B cell (primary cell): ENCODE measurements at regions of chr6 and their contacts with region 1.

Region 1: DNA sequence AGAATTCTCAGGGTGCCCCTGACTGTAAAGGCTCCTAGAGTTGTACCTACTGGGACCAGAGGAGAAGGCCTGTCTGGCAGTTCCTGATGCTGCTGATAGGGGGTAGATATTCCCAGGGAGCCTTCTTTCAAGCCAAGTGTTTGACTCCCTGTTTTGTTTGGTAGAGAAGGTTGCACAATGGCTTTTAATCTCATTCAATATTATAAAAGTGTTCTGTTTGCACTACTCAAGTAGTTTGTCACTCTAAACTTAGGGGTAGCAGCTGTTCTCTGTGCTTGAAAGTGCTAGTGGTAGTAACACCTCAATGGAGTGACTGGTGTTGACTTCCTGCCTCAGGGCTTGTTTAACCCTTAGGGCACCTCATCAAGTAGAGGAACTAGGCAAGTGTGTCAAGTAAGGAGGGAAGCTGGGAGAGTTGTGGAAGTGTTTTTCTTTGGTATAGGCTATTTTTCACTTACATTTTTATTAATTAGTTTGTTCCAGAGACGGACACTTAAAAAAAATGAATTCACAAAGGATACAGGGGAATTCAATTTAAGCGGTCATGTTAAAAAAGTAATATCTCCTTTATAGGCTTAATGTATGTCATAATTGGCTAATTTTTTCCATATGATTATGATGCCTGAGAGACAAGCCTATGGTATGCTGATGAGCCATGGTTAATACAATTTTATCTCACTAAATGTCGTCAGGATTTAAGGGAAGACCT is 38.1 kb downstream of the BICRAL start:
- DNase-seq: peak; percentile 30
- ATAC-seq: peak; percentile 41
- H3K4me3 ChIP-seq: no peak overlapping the region
- H3K4me3 Mint-ChIP-seq: no peak overlapping the region
- H3K27ac ChIP-seq: peak overlapping the region in 1 of 2 donors; percentile 55
- H3K27ac Mint-ChIP-seq: peak overlapping the region; percentile 81
- H3K4me1 ChIP-seq: peaks cover 6 to 19% of the 10 kb centered on the region in 2 donors
- H3K4me1 Mint-ChIP-seq: peaks cover 26% of the 10 kb centered on the region
- H3K27me3 ChIP-seq: no peaks in the 10 kb centered on the region
- H3K27me3 Mint-ChIP-seq: no peaks in the 10 kb centered on the region
- CTCF ChIP-seq: no peak

Region 2: GRCh38 chr6:42777126-42777822 is 42.7 kb before region 1 on chr6:
- CTCF ChIA-PET with region 1: no interaction called
- POLR2A ChIA-PET with region 1: interaction called, 4 read pairs
- intact Hi-C with region 1: loop called (anchors 5 kb)
- DNase-seq: peak; percentile 49
- ATAC-seq: no peak
- H3K4me3 ChIP-seq: no peak overlapping the region
- H3K4me3 Mint-ChIP-seq: peak overlapping the region; percentile 62
- H3K27ac ChIP-seq: peak overlapping the region; percentile 16 to 32
- H3K27ac Mint-ChIP-seq: peak overlapping the region; percentile 91
- H3K4me1 ChIP-seq: peaks cover 60 to 67% of the 10 kb centered on the region in 2 donors
- H3K4me1 Mint-ChIP-seq: peaks cover 67% of the 10 kb centered on the region
- H3K27me3 ChIP-seq: no peaks in the 10 kb centered on the region
- H3K27me3 Mint-ChIP-seq: no peaks in the 10 kb centered on the region
- CTCF ChIP-seq: no peak

Region 3: DNA sequence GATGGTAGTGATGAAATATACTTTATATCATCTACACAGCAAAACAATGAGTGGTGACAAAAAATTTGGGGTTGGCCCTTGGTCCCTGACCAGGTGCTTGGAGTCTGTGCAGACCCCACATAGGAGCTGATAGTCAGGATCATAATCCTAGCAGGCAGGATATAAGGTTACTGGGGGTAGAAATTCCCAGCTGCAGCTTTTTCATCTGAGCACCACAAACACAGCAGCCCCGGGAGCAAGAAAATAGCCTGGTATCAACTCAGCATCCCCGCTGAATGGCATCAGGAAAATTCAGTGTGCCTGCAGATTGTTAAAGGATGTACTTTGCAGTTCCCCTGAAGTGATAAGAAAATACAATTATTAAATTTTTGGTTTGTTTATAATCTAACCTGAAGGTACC is 31.6 kb after region 1 on chr6:
- CTCF ChIA-PET with region 1: no interaction called
- POLR2A ChIA-PET with region 1: no interaction called
- intact Hi-C with region 1: no loop called
- DNase-seq: no peak
- ATAC-seq: no peak
- H3K4me3 ChIP-seq: no peak overlapping the region
- H3K4me3 Mint-ChIP-seq: no peak overlapping the region
- H3K27ac ChIP-seq: no peak overlapping the region
- H3K27ac Mint-ChIP-seq: no peak overlapping the region
- H3K4me1 ChIP-seq: no peaks in the 10 kb centered on the region
- H3K4me1 Mint-ChIP-seq: no peaks in the 10 kb centered on the region
- H3K27me3 ChIP-seq: no peaks in the 10 kb centered on the region
- H3K27me3 Mint-ChIP-seq: no peaks in the 10 kb centered on the region
- CTCF ChIP-seq: no peak

Region 4: DNA sequence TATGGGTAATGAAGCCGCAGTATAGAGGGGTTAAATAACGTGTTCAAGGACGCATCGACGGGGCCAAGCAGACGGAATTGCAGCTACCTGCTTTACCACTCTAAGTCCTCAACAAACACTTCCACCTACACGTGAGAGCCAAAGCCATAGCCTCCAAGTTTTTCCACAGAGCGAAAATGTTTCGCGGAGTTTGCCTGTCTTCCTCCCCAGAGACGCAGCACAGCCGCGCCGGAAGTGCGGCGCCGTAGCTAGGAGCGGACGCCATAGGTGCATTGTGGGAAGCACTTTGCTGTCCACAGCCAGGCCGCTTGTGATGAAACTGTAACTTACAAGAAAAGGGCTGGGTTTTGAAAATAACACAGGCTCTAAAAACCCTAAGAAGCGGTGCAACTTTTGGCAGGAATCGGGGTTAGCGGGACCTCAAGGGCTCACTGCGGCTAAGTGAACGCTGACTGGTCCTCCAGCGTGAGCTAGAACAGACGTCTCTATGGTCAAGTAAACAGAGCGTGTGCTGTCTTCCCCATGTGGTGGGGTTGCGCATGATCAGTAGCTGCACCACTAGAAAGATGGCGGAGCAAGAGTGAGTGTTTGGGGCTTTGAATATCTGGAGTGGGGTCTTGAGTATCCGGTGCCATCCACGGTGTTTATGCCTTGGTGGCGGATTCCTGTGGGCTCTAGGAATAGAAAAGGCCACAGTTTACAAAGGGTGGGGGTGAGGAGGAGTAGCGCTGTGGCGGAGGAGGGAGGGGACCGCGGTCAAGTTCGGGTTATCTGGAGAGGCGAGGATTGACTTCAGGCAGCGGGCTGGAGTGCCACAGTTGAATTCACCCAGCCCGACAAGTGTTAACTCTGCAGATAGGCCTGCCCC is 59.6 kb after region 1 on chr6 and contains the start of gene RPL7L1:
- CTCF ChIA-PET with region 1: no interaction called
- POLR2A ChIA-PET with region 1: no interaction called
- intact Hi-C with region 1: no loop called
- DNase-seq: peak; percentile 93
- ATAC-seq: peak; percentile 95
- H3K4me3 ChIP-seq: peak within 1 kb of the TSS; percentile 76 to 99 (median 90)
- H3K4me3 Mint-ChIP-seq: peak within 1 kb of the TSS; percentile 96
- H3K27ac ChIP-seq: peak within 1 kb of the TSS; percentile 85 to 87
- H3K27ac Mint-ChIP-seq: peak within 1 kb of the TSS; percentile 97
- H3K4me1 ChIP-seq: peaks cover 8 to 18% of the 10 kb centered on the region in 2 donors
- H3K4me1 Mint-ChIP-seq: peaks cover 21% of the 10 kb centered on the region
- H3K27me3 ChIP-seq: no peaks in the 10 kb centered on the region
- H3K27me3 Mint-ChIP-seq: no peaks in the 10 kb centered on the region
- CTCF ChIP-seq: no peak
- total RNA-seq, gene RPL7L1: 95.9 and 100 TPM in 2 replicates